Sigmoid colon (tissue), 7 donors: ENCODE measurements at regions of chr4 and their contacts with region 1.

Region 1: GRCh38 chr4:89024051-89024675 is 32.8 kb downstream of the FAM13A start:
- DNase-seq: peak; percentile 66
- H3K4me3 ChIP-seq: no peak overlapping the region
- H3K27ac ChIP-seq: no peak overlapping the region
- H3K4me1 ChIP-seq: peaks cover 0 to 5% (median 2%) of the 10 kb centered on the region in 4 donors
- H3K27me3 ChIP-seq: no peaks in the 10 kb centered on the region
- CTCF ChIP-seq: peak; percentile 77 to 92 (median 86)
- EP300 ChIP-seq: no peak
- POLR2A ChIP-seq: no peak

Region 2: GRCh38 chr4:88535090-88535755 is 488.9 kb before region 1 on chr4:
- intact Hi-C with region 1: loop called (anchors 5 kb)
- DNase-seq: no peak
- H3K4me3 ChIP-seq: no peak overlapping the region
- H3K27ac ChIP-seq: no peak overlapping the region
- H3K4me1 ChIP-seq: peaks cover 0 to 7% (median 0%) of the 10 kb centered on the region in 4 donors
- H3K27me3 ChIP-seq: no peaks in the 10 kb centered on the region
- CTCF ChIP-seq: no peak
- EP300 ChIP-seq: no peak
- POLR2A ChIP-seq: no peak

Region 3: GRCh38 chr4:88706574-88706973 is 317.6 kb before region 1 on chr4:
- intact Hi-C with region 1: loop called (anchors 2 kb)
- DNase-seq: no peak
- H3K4me3 ChIP-seq: no peak overlapping the region
- H3K27ac ChIP-seq: peak overlapping the region; percentile 43 to 67 (median 60)
- H3K4me1 ChIP-seq: peaks cover 0 to 18% (median 14%) of the 10 kb centered on the region in 4 donors
- H3K27me3 ChIP-seq: no peaks in the 10 kb centered on the region
- CTCF ChIP-seq: peak; percentile 20 to 50 (median 38)
- EP300 ChIP-seq: no peak
- POLR2A ChIP-seq: no peak

Region 4: DNA sequence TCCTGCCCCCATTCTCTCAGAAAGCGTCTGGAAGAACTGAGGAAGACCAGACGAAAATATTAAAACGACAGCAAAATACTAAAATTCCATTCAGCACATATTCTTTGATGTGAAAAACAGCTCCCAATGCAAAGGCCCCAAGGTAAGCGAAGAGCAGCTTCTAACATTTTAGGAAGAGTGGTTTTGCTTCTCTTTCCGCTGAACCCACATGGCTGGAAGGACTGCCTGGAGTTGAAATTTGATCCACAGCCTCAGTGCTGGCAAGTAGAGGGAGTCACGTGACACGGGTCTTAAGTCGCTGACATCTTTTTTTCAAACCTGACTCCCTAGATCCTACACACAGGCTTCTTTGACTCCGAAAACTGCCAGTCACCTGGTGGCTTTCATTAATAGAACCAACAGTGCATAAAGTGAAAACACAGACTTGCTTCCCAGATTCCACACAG is 32.8 kb after region 1 on chr4 and contains the start of gene FAM13A:
- intact Hi-C with region 1: no loop called
- DNase-seq: peak; percentile 95
- H3K4me3 ChIP-seq: peak within 1 kb of the TSS; percentile 37 to 54 (median 51)
- H3K27ac ChIP-seq: peak within 1 kb of the TSS; percentile 71 to 81 (median 74)
- H3K4me1 ChIP-seq: peaks cover 0 to 32% (median 21%) of the 10 kb centered on the region in 4 donors
- H3K27me3 ChIP-seq: no peaks in the 10 kb centered on the region
- CTCF ChIP-seq: no peak
- EP300 ChIP-seq: no peak
- POLR2A ChIP-seq: no peak
- total RNA-seq, gene FAM13A: 41.1 to 49.7 (median 47.3) TPM